ENCODE measurements at regions of chr4 and their contacts with region 1.

Region 1: DNA sequence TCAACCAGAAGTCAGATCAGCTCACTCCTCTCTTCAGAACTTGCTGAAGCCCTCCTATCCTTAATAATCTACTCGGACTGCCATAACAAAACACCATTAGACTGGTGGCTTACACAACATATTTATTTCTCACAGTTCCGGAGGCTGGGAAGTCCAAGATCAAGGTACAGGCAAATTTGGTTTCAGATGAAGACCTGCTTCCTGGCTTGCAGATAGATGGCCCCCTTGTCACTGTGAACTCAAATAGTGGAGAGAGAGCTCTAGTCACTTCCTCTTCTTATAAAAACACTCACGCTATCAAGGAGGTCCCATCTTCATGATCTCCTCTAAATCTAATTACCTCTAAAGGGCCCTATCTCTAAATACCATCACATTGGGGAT is 125.1 kb downstream of the CAMK2D start:
- DNase-seq: no peak
- H3K4me3 Mint-ChIP-seq: peak overlapping the region; percentile 64
- H3K27ac Mint-ChIP-seq: peak overlapping the region; percentile 87
- H3K4me1 Mint-ChIP-seq: peaks cover 54% of the 10 kb centered on the region
- H3K27me3 Mint-ChIP-seq: no peaks in the 10 kb centered on the region

Region 2: DNA sequence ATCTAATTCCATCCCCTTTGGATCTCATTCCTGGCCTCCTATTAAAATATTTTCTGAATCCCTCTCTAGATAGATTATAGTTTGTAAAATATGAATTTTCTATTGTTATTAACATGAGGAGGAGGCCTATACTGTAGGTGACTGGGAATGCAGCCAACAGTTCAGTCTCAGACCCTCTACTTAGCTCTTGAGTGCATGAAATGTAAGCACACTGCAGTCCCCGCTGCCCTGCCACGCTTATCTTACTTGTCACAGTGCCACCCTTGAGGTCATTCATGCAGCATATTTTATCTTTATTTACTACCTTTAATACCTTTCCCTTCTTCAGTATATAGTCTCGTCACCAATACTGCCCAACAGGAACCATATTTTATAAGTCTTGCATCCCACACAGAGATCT is 25.9 kb before region 1 on chr4:
- intact Hi-C with region 1: no loop called
- DNase-seq: no peak
- H3K4me3 Mint-ChIP-seq: no peak overlapping the region
- H3K27ac Mint-ChIP-seq: no peak overlapping the region
- H3K4me1 Mint-ChIP-seq: peaks cover 27% of the 10 kb centered on the region
- H3K27me3 Mint-ChIP-seq: no peaks in the 10 kb centered on the region

Region 3: DNA sequence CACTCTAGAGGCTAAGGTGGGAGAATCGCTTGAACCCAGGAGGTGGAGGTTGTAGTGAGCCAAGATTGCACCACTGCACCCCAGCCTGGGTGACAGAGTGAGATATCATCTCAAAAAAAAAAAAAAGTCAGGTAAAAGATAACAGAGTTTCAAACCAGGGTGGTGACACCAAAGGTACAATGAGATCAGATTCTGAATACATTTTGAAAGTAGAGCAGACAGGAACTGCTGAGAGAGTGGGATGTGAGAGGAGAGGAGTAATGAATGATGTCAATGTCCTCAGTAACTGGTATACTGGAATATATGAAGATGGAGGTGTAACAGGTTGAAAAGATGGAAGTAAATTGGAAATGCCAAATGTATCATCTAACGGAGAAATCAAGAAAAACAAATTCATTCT is 10.5 kb before region 1 on chr4:
- intact Hi-C with region 1: loop called (anchors 1 kb)
- DNase-seq: no peak
- H3K4me3 Mint-ChIP-seq: no peak overlapping the region
- H3K27ac Mint-ChIP-seq: peak overlapping the region; percentile 25
- H3K4me1 Mint-ChIP-seq: peaks cover 40% of the 10 kb centered on the region
- H3K27me3 Mint-ChIP-seq: no peaks in the 10 kb centered on the region

Region 4: GRCh38 chr4:113700602-113701150 is 64.2 kb after region 1 on chr4:
- intact Hi-C with region 1: no loop called
- DNase-seq: no peak
- H3K4me3 Mint-ChIP-seq: no peak overlapping the region
- H3K27ac Mint-ChIP-seq: no peak overlapping the region
- H3K4me1 Mint-ChIP-seq: peaks cover 29% of the 10 kb centered on the region
- H3K27me3 Mint-ChIP-seq: no peaks in the 10 kb centered on the region

Measured in activated T-helper 1 cell treated with anti-CD3 and anti-CD28 coated beads, Interleukin-12 subunit alpha, Interleukin-12 subunit beta, Interleukin-2, Interleukin-4 antibody, amounts not matched to agents 30 ng/mL and 10 ng/mL and 1 ng/mL, durations not matched to agents 14 hours and 24 hours and 36 hours (primary cell).